Right cardiac atrium (tissue), 5 donors: ENCODE measurements at regions of chr1 and their contacts with region 1.

Region 1: DNA sequence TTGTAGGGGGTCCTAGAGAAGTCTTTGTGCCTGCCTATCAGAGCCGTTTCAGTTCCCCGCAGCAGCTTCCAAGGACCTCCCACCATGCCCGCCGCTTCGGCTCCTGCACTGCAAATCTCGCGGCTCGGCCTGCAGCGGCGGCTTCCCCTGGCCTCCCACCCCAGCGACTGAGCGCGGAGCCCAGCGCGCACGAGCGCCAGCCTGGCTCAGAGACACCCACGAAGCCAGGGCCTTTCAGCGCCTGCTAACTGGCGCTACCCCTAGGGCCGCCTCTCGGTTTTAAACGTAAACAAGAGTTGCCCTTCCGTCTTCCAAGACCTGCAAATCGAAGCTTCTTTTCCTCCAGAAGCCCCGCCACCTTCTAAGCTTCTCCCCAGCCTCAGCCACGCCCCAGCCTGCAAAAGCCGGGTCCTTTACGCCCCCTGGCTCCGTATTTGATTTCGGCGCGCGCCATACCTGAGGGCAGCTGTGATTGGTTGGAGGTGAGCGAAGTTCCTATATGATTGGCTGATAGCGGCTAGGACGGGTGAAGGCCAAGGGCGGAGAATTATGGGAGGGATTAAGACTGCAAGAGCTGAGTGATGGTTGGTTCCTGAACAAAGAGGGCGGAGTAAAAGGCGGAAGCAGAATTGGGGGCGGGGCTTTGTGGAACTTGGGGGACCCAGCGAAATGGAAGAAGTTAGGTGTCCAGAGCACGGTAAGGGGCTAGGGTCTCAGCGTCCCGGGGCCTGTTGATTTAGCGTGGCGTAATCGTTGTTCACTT is at the start of gene TTF2:
- DNase-seq: peak; percentile 90 to 94 (median 93)
- ATAC-seq: peak; percentile 99 to 100
- H3K4me3 ChIP-seq: peak within 1 kb of the TSS; percentile 53
- H3K27ac ChIP-seq: peak within 1 kb of the TSS; percentile 50
- H3K4me1 ChIP-seq: no peaks in the 10 kb centered on the region
- H3K27me3 ChIP-seq: no peaks in the 10 kb centered on the region
- total RNA-seq, gene TTF2: 8.7 to 10.6 (median 9.2) TPM

Region 2: DNA sequence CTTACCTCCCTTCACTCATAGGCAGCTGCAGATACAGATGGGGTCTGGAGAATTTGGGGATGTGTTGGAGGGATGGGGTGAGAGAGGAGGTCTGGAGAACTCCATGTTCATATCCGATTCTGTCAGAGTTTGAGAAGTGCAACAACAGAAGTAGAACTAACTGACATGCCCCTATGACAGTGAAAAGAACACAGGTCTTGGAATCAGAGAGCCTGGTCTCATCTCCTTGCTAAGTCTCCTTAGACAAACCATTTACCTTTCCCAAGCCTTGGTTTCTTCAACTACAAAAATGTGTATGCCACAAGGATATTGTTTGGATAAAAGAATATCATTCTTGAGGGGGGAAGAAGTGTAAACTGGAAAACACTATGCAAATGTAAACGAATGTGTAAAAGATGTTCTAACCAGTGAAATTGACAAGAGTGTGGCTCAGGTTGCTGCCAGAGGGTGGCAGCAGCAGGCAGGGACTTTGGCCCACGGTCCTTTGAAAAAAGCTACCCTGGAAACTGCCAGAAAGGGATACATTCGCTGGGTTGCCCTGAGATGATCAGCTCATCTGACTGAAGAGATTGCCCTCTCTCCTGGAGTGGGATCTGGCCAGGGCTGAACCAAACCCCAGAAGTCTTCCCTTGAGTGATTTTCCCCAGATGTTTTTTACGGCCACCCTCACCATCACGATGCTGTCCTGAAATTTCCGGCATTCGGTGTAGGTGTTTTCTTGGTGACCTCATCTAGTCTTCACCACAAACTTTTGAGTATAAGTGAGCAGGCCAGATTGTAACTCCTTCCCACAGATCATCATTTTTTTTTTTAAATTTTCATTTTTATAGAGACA is 322.6 kb before region 1 on chr1:
- intact Hi-C with region 1: loop called (anchors 2 to 5 kb)
- DNase-seq: peak; percentile 43 to 79 (median 70)
- ATAC-seq: peak in 1 of 2 donors; percentile 74
- H3K4me3 ChIP-seq: no peak overlapping the region
- H3K27ac ChIP-seq: no peak overlapping the region
- H3K4me1 ChIP-seq: no peaks in the 10 kb centered on the region
- H3K27me3 ChIP-seq: no peaks in the 10 kb centered on the region

Region 3: DNA sequence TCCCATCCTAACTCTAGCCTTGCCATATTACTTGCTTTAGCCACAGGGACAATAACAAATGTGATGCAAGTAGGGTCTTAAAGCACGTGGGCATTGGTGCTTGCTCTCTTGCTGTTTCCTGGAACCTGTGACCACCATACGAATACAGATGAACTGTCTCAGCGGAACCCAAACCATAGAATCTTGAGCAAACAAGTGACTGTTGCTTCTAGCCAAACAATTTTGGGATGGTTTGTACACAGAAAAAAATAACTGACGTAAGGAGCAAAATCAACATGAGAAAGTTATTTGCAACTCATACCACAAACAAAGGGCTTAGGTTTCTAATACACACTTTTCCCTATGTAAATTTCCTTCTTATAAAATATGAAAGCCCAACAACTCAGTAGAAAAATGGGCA is 166.1 kb after region 1 on chr1:
- intact Hi-C with region 1: no loop called
- DNase-seq: no peak
- ATAC-seq: no peak
- H3K4me3 ChIP-seq: no peak overlapping the region
- H3K27ac ChIP-seq: no peak overlapping the region
- H3K4me1 ChIP-seq: no peaks in the 10 kb centered on the region
- H3K27me3 ChIP-seq: no peaks in the 10 kb centered on the region